ENCODE measurements at regions of chr13 and their contacts with region 1.

Region 1: DNA sequence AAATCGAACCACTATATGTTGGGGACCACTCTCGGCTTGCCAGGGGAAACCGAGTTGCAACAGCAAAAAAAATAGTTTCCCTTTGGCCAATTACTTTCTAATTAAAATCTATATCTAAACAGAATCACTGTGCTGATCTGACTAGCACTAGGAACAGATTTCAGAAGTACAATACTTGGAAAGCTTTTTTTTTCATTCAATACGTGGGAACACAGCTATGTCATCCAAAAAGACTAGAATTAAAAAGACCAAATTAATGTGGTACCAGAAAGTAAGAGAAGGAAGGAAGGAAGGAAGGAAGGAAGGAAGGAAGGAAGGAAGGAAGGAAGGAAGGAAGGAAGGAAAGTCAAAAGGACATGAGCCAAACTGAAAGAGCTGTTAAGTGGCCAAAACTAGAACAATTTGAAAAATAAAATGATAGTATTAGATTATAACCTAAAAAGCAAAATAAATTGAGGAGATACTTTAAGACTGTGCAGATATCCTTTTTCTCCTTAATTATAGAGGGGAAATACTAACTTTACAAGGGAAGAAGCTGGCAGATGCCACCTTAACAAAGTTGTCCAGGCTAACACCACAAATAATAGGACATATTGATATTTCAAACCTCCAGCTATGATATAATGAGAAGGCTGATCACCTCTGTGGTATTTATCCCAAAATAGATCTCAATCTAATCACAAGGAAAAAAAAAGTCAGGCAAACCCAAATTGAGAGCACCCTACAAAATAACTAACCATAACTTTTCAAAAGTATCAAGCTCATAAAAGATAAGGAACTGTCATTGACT is 63.9 kb downstream of the DIAPH3 start:
- DNase-seq: peak; percentile 96
- H3K4me3 ChIP-seq: peak overlapping the region; percentile 5
- H3K27ac ChIP-seq: peak overlapping the region; percentile 100
- H3K4me1 ChIP-seq: peaks cover 94% of the 10 kb centered on the region
- H3K27me3 ChIP-seq: no peaks in the 10 kb centered on the region
- CTCF ChIP-seq: no peak

Region 2: GRCh38 chr13:58429917-58430316 is 1669.9 kb before region 1 on chr13:
- CTCF ChIA-PET with region 1: no interaction called
- POLR2A ChIA-PET with region 1: no interaction called
- intact Hi-C with region 1: no loop called
- DNase-seq: no peak
- H3K4me3 ChIP-seq: no peak overlapping the region
- H3K27ac ChIP-seq: no peak overlapping the region
- H3K4me1 ChIP-seq: no peaks in the 10 kb centered on the region
- H3K27me3 ChIP-seq: no peaks in the 10 kb centered on the region
- CTCF ChIP-seq: no peak

Region 3: DNA sequence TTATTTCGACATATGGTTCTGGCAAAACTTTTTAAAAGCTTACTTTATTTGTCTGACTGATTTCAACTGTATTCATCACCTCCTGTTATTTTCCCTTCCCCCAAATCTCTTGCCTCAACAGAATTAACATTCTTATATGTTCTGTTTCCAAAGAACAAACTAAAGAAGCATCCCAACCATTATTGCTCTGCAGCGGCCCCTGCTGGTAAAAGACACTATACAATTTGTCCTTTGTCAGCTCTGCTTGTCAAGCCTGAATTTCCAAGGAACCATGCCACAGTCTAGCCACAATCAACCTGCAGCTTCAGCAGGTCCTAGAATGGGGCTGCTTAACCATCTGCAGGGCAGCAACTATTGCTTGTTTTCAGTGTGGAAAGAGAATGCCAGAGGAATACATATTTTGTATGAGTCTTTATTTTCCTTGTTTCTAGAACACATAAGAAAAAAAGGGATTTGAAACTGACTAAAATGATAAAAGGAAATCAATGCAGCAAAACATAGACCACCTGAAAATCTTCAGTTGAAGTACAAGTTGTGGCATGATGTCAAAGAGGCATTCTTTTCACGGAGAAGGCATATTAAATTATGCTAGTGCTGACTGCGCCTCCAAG is 781.4 kb before region 1 on chr13:
- CTCF ChIA-PET with region 1: no interaction called
- POLR2A ChIA-PET with region 1: no interaction called
- intact Hi-C with region 1: no loop called
- DNase-seq: peak; percentile 93
- H3K4me3 ChIP-seq: no peak overlapping the region
- H3K27ac ChIP-seq: peak overlapping the region; percentile 24
- H3K4me1 ChIP-seq: peaks cover 32% of the 10 kb centered on the region
- H3K27me3 ChIP-seq: no peaks in the 10 kb centered on the region
- CTCF ChIP-seq: peak; percentile 88

Region 4: DNA sequence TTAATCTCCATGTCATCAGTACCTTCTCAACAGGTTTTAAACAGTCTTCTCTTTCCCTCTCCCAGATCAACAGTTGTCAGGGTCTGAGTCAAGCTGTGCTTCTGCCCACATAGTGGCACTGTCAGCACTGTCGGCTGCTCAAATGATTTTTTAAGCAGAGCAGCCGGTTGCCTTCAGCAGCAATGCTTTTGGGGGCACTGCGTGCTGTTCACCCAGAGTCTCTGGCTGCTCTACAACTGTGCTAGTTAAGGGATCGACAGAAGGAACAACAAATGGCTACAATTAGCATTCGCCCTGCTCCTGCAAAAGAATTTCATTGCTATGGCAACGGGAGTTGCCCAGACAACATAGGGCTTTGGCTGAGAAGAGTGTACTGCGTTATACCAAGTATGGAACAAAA is 349.0 kb before region 1 on chr13:
- CTCF ChIA-PET with region 1: interaction called, 8 read pairs
- POLR2A ChIA-PET with region 1: no interaction called
- intact Hi-C with region 1: loop called (anchors 1 kb)
- DNase-seq: peak; percentile 93
- H3K4me3 ChIP-seq: peak overlapping the region; percentile 35
- H3K27ac ChIP-seq: peak overlapping the region; percentile 76
- H3K4me1 ChIP-seq: peaks cover 73% of the 10 kb centered on the region
- H3K27me3 ChIP-seq: no peaks in the 10 kb centered on the region
- CTCF ChIP-seq: peak; percentile 29; the same call in 1 of the 2 replicates

Region 5: GRCh38 chr13:59946944-59947343 is 152.9 kb before region 1 on chr13:
- CTCF ChIA-PET with region 1: interaction called, 6 read pairs
- POLR2A ChIA-PET with region 1: interaction called, 9 read pairs
- intact Hi-C with region 1: loop called (anchors 1 kb)
- DNase-seq: peak; percentile 78
- H3K4me3 ChIP-seq: no peak overlapping the region
- H3K27ac ChIP-seq: peak overlapping the region; percentile 86
- H3K4me1 ChIP-seq: peaks cover 60% of the 10 kb centered on the region
- H3K27me3 ChIP-seq: no peaks in the 10 kb centered on the region
- CTCF ChIP-seq: no peak

Region 6: GRCh38 chr13:60163478-60164233 is 63.8 kb after region 1 on chr13 and contains the start of gene DIAPH3:
- CTCF ChIA-PET with region 1: no interaction called
- POLR2A ChIA-PET with region 1: no interaction called
- intact Hi-C with region 1: loop called (anchors 5 kb)
- DNase-seq: peak; percentile 97
- H3K4me3 ChIP-seq: peak within 1 kb of the TSS; percentile 79
- H3K27ac ChIP-seq: peak within 1 kb of the TSS; percentile 84
- H3K4me1 ChIP-seq: peaks cover 17% of the 10 kb centered on the region
- H3K27me3 ChIP-seq: no peaks in the 10 kb centered on the region
- CTCF ChIP-seq: no peak
- total RNA-seq, gene DIAPH3: 62.3 and 65.7 TPM in 2 replicates

Region 7: GRCh38 chr13:60335531-60335930 is 235.7 kb after region 1 on chr13:
- CTCF ChIA-PET with region 1: interaction called, 11 read pairs
- POLR2A ChIA-PET with region 1: no interaction called
- intact Hi-C with region 1: no loop called
- DNase-seq: peak; percentile 64
- H3K4me3 ChIP-seq: no peak overlapping the region
- H3K27ac ChIP-seq: peak overlapping the region; percentile 88
- H3K4me1 ChIP-seq: peaks cover 53% of the 10 kb centered on the region
- H3K27me3 ChIP-seq: no peaks in the 10 kb centered on the region
- CTCF ChIP-seq: peak; percentile 82

Measured in A673 (cell line).